H1 (cell line): ENCODE measurements at regions of chr6 and their contacts with region 1.

Region 1: DNA sequence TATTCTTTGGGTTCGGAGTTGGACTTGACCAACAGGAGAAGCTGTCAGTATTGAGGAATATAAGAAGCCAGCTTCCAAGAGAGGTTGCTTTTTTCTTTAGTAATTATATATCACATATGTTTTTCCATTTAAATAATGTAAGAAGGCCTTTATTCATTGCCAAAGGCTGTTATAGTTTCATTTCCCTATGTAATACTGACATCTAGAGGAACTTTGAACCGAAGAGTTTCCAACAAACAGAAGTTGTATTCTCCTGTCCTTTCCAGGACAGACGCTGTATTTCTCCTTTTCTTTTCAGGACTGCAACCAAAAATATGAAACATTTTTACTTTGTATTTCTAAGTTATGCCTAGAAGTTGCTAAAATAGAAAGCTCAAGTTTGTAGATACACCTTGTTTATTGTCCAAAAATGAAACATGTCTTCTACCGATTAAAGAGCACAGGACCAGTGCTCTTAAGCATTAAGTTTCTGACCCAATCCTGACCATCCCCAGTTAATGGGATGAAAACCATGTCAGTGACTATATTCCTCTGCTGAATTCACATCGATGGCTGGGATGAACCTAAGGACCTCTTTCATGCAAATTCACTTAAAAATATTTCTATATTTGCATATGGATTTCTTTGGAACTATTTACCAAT is 55.1 kb downstream of the MYLK4 start:
- DNase-seq: no peak
- H3K4me3 ChIP-seq: no peak overlapping the region
- H3K27ac ChIP-seq: no peak overlapping the region
- H3K4me1 ChIP-seq: no peaks in the 10 kb centered on the region
- H3K27me3 ChIP-seq: no peaks in the 10 kb centered on the region; a peak in 1 of 7 replicates
- CTCF ChIP-seq: peak in 2 of 3 experiments; percentile 35 to 43; a peak in 2 of 4 replicates
- EP300 ChIP-seq: no peak
- POLR2A ChIP-seq: no peak
- RAD21 ChIP-seq: peak; percentile 64 to 74

Region 2: GRCh38 chr6:2534406-2535042 is 161.1 kb before region 1 on chr6:
- CTCF ChIA-PET with region 1: no interaction called
- POLR2A ChIA-PET with region 1: no interaction called
- DNase-seq: no peak
- H3K4me3 ChIP-seq: no peak overlapping the region
- H3K27ac ChIP-seq: no peak overlapping the region
- H3K4me1 ChIP-seq: no peaks in the 10 kb centered on the region
- H3K27me3 ChIP-seq: no peaks in the 10 kb centered on the region
- CTCF ChIP-seq: no peak
- EP300 ChIP-seq: no peak
- POLR2A ChIP-seq: no peak
- RAD21 ChIP-seq: no peak

Region 3: DNA sequence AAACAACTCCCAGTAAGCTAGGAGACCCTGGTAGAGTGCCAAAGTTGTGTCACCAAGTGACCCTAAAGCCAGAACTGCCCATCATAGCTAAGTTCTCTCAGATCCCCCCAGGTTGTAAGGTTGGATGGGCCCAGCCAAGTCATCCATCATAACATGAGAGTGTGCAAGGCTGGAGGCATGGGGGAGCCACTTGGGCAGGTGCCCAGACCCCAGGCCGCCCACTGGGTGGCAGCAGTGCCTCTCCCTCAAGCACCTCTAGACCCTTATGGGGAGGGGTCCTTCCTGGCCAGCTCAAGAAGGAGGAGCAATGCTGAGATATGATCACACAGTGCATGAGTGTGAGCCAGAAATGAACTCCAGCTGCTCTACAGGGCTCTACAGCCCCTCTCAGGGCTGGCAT is 99.4 kb before region 1 on chr6:
- CTCF ChIA-PET with region 1: interaction called, 16 read pairs
- POLR2A ChIA-PET with region 1: no interaction called
- DNase-seq: peak; percentile 44 to 71
- H3K4me3 ChIP-seq: no peak overlapping the region
- H3K27ac ChIP-seq: no peak overlapping the region
- H3K4me1 ChIP-seq: 0 out of 7 replicates have a peak, but pooled peaks cover 0 to 2% (median 0%) of the 10 kb centered on the region in 4 experiments
- H3K27me3 ChIP-seq: no peaks in the 10 kb centered on the region
- CTCF ChIP-seq: peak; percentile 89 to 91 (median 89)
- EP300 ChIP-seq: no peak
- POLR2A ChIP-seq: no peak
- RAD21 ChIP-seq: peak; percentile 83 to 93

Region 4: GRCh38 chr6:2684059-2684749 is 11.4 kb before region 1 on chr6:
- CTCF ChIA-PET with region 1: interaction called, 39 read pairs
- POLR2A ChIA-PET with region 1: no interaction called
- DNase-seq: no peak
- H3K4me3 ChIP-seq: no peak overlapping the region
- H3K27ac ChIP-seq: no peak overlapping the region
- H3K4me1 ChIP-seq: no peaks in the 10 kb centered on the region; a peak in 1 of 7 replicates
- H3K27me3 ChIP-seq: no peaks in the 10 kb centered on the region; a peak in 1 of 7 replicates
- CTCF ChIP-seq: no peak
- EP300 ChIP-seq: no peak
- POLR2A ChIP-seq: no peak
- RAD21 ChIP-seq: no peak

Region 5: GRCh38 chr6:2756687-2757224 is 61.2 kb after region 1 on chr6:
- CTCF ChIA-PET with region 1: no interaction called
- POLR2A ChIA-PET with region 1: no interaction called
- DNase-seq: no peak
- H3K4me3 ChIP-seq: no peak overlapping the region
- H3K27ac ChIP-seq: no peak overlapping the region
- H3K4me1 ChIP-seq: no peaks in the 10 kb centered on the region
- H3K27me3 ChIP-seq: no peaks in the 10 kb centered on the region
- CTCF ChIP-seq: no peak
- EP300 ChIP-seq: no peak
- POLR2A ChIP-seq: no peak
- RAD21 ChIP-seq: no peak